H1 (cell line): ENCODE measurements at regions of chr14 and their contacts with region 1.

Region 1: DNA sequence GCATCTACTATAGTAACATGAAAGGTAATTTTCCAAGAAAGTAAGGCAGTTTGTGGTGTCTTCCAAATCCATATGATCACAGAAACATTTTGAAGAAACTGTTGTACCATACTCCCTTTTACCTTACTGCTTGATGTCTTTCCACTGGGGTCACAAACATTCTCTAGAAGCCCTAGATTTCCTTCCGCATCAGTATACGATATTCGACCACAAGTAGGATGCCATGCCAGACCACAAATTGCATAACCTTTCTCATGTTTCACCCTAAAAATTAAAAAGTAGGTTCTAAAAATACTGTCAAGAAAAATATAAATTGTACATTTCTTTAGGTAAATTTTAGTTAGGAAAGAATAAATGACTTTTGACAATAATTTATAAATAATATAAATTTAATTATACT is 26.5 kb downstream of the WDHD1 start:
- DNase-seq: no peak
- H3K4me3 ChIP-seq: no peak overlapping the region
- H3K27ac ChIP-seq: no peak overlapping the region
- H3K4me1 ChIP-seq: no peaks in the 10 kb centered on the region
- H3K27me3 ChIP-seq: no peaks in the 10 kb centered on the region
- CTCF ChIP-seq: no peak
- EP300 ChIP-seq: no peak
- POLR2A ChIP-seq: no peak
- RAD21 ChIP-seq: no peak

Region 2: DNA sequence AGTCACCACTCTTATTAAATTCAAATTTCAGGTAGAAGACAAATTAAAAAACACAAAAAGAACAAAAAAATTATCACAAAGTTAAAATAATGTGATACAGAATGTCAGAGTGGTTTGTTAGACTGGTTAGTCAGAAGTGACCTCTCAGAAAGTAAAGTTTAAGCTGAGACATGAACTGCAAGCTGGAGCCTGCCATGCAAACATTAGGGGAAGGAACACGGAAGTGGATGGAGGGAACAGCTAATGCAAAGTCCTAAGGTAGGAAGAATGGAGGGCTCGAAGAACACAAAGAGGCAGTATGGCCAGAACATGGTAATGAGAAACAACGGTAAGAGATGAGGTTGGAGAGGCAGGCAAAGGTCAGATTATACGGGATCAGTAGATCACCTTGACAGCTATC is 15.2 kb before region 1 on chr14:
- CTCF ChIA-PET with region 1: interaction called, 3 read pairs
- POLR2A ChIA-PET with region 1: interaction called, 11 read pairs
- DNase-seq: no peak
- H3K4me3 ChIP-seq: no peak overlapping the region
- H3K27ac ChIP-seq: no peak overlapping the region
- H3K4me1 ChIP-seq: no peaks in the 10 kb centered on the region
- H3K27me3 ChIP-seq: no peaks in the 10 kb centered on the region
- CTCF ChIP-seq: no peak
- EP300 ChIP-seq: no peak
- POLR2A ChIP-seq: no peak
- RAD21 ChIP-seq: no peak